ENCODE measurements at regions of chr19 and their contacts with region 1.

Region 1: GRCh38 chr19:44570984-44571684 is 41.7 kb upstream of the CEACAM20 start:
- DNase-seq: peak; percentile 76 to 87
- H3K4me3 ChIP-seq: no peak overlapping the region
- H3K4me1 ChIP-seq: peaks cover 14% of the 10 kb centered on the region
- H3K27me3 ChIP-seq: peaks cover 6% of the 10 kb centered on the region

Region 2: DNA sequence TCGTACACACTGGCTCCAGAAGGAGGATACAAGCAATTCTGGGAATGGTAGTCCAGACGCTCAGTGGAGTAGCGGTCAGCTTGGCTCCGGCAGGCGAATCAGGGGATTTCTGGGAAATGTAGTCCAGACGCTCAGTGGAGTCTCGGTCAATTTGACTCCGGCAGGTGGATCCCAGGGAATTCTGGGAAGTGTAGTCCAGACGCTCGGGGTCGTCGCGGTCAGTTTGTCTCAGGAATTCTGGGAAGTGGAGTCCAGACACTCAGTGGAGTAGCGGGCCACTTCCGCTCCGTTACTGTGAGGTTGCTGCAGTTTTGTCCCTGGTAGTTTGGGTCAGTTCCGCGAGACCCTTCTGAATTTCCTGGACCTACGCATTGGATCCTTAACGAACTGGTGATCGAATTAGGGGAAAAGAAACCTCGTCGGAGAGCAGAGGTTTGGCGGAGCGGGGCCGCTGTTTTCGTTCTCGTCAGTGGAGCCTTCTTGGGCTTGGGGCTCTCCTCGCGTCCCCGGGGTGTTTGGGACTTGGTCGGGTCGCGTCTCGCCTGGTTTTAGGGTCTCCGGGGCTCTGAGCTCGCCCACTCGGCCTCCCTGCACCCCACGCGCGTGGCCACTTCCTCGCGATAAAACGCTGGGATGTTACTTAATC is 457.9 kb before region 1 on chr19 and contains the start of gene ZNF225:
- in situ Hi-C with region 1: no loop called
- DNase-seq: peak; percentile 95 to 99
- H3K4me3 ChIP-seq: peak within 1 kb of the TSS; percentile 82
- H3K4me1 ChIP-seq: peaks cover 6% of the 10 kb centered on the region
- H3K27me3 ChIP-seq: no peaks in the 10 kb centered on the region

Region 3: DNA sequence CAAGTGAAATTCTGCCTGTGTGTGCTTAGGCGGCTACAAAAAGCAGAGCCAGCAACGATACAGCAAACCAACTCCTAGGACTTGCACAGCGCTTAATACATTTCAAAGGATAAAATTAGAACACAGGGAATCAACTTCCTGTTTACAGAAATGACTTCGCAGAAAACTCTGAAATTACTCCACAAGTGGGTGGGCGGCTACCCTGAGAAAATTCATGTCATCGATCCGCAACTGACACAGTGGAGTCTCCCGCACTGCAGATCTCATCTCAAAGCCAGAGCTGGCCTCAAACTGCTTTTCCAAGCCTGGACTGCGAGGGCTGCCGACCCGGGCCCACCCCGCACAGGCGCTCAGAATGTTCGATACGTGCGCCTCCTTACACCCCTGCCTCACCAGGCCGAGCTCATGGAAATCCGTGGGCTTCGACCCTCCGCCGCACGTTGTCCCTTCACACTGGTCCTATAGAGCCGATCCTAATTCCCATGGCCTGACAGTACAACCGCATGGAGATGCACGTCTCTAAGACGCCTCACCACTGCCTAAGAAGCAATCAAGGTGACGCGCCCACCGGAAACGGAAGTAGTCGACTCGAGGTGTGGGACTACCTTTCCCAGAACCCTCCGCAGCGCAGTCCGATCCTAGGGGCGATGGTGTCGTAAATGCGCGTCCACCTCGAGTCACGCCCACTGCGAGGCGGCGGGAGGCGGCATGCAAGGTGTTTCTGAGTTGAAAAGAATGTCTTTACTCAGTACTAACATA is 123.0 kb before region 1 on chr19 and contains the start of gene ZNF229:
- in situ Hi-C with region 1: no loop called
- DNase-seq: no peak
- H3K4me3 ChIP-seq: no peak within 1 kb of the TSS
- H3K4me1 ChIP-seq: no peaks in the 10 kb centered on the region
- H3K27me3 ChIP-seq: no peaks in the 10 kb centered on the region

Region 4: DNA sequence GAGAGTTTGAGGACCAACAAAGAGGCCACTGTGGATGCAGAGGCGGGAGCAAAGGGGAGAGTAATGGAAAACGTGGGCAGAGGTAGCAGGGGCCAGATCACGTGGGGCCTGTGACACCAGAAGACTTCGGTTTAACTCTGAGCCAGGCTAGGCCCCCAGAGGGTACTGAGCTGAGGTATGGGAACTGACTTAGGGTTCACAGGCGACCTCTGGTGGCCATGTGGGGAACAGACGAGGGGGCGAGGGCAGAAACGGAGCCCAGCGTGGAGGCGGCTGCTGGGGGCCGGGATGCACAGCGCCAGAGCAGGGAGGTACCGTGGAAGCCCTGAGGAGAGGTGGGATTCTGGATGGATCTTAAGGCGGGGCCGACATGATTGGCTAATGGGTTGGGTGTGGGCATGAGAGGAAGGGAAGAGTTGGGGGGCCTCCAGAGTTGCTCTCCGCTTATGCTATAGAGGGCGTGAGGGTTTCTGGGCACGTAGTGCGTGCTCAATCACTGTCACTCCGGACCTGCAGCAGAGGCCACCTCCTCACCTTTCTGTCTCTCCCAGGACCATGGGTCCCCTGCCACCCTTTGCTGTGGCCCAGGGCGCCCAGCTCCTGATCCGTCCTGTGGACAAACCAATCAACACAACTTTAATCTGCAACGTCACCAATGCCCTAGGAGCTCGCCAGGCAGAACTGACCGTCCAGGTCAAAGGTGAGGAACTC is 86.2 kb after region 1 on chr19:
- in situ Hi-C with region 1: loop called (anchors 5 kb)
- DNase-seq: peak; percentile 62 to 89
- H3K4me3 ChIP-seq: no peak overlapping the region
- H3K4me1 ChIP-seq: no peaks in the 10 kb centered on the region
- H3K27me3 ChIP-seq: no peaks in the 10 kb centered on the region

Region 5: GRCh38 chr19:44770550-44771257 is 199.6 kb after region 1 on chr19:
- in situ Hi-C with region 1: loop called (anchors 10 kb)
- DNase-seq: peak; percentile 96
- H3K4me3 ChIP-seq: no peak overlapping the region
- H3K4me1 ChIP-seq: peaks cover 4% of the 10 kb centered on the region
- H3K27me3 ChIP-seq: no peaks in the 10 kb centered on the region

Region 6: DNA sequence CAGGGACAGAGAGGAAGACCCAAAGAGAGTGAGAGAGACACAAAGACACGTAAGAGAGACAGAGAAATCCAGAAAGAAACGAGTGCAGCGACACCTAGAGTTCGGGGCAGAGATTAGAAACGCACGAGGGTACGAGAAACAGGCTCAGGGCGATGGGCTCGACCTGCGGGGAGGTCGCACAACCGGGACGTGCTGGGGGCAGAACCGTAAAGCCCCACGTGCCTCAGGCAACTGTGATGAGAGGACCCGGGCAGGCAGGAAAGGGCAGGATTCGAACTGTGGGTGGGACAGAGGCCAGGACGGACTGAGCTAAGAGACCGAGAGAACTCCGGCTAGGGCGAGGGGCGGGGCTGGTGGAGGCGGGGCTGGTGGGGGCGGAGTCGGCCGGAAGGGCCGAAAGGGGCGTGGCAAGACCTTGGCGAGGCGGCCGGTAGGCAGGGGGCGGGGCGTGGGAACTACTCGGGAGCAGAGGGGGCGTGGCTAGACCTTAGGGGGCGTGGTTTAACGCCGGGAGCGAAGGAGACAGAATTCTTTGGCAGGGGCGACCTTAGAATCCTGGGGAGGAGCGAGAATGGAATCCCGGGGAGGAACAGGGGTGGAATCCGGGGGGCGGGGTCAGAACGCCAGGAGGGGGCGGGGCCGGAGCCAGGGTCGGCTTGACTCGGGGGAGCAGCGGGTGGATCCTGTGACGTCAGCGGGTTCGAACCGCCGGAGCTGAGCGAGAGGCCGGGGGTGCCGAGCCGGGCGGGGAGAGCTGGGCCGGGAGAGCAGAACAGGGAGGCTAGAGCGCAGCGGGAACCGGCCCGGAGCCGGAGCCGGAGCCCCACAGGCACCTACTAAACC is 274.7 kb after region 1 on chr19 and contains the start of gene NECTIN2:
- in situ Hi-C with region 1: loop called (anchors 10 kb)
- DNase-seq: peak; percentile 95 to 100
- H3K4me3 ChIP-seq: peak within 1 kb of the TSS; percentile 94
- H3K4me1 ChIP-seq: peaks cover 19% of the 10 kb centered on the region
- H3K27me3 ChIP-seq: no peaks in the 10 kb centered on the region